Heart left ventricle (tissue), 16 donors: ENCODE measurements at regions of chr3 and their contacts with region 1.

Region 1: DNA sequence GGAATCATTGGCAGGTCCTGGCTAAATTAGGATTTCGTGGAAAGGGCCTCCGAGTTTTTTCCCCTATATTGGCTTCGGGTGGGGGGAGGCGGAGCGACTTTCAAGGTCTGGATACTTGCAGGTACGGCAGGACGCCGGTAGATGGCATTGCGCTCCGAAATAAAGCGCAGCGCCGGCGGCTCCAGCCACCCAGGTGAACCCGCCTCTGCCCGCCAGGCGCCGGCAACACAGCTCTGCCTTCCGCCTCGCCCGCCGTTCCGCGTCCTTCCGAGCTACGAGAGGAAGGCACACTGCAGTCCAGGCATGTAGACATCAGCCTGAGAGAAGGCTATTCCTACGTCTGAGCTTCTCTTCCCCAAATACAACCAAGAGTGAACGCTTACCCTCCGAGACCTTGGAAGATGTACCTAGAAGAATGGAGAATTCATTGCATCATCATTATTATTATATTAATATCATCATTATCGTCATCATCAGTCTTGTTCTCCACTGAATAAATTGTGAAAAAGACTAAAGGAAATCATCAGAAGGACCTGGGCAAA is 514.1 kb downstream of the MECOM start:
- DNase-seq: peak; percentile 84 to 89 (median 85)
- ATAC-seq: peak; percentile 79 to 88 (median 84)
- H3K4me3 ChIP-seq: peak overlapping the region in 11 of 12 donors; percentile 1 to 72 (median 43)
- H3K27ac ChIP-seq: peak overlapping the region; percentile 47 to 90 (median 70)
- H3K4me1 ChIP-seq: peaks cover 0 to 44% (median 6%) of the 10 kb centered on the region in 12 donors
- H3K27me3 ChIP-seq: peaks cover 0 to 51% (median 31%) of the 10 kb centered on the region in 9 donors
- CTCF ChIP-seq: peak; percentile 64 to 93 (median 87)
- POLR2A ChIP-seq: no peak

Region 2: DNA sequence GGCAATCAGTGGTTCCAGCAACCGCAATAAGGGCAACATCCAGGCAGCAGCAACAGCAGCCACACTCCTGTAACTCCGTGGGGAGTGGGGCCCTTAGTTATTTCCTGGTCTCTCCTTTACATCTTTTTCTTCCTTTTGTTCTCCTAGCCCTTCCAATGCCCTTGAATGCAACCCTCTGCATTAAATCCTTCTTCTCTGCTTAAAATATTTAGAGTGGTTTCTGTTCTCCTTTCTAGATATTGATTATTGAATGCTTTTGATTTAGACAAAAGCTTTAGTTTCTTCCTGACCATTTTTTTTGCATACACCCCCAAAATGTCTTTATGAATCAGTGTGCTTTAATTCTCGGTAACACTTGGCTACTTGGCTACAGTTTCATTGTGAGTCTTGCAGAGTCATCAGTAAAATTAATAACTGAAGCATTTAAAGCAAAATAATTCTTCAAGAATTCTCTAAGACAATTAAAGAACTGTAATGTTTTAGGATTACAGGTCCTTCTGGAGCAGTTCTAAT is 72.0 kb before region 1 on chr3:
- intact Hi-C with region 1: no loop called
- DNase-seq: no peak
- ATAC-seq: no peak
- H3K4me3 ChIP-seq: no peak overlapping the region
- H3K27ac ChIP-seq: no peak overlapping the region
- H3K4me1 ChIP-seq: no peaks in the 10 kb centered on the region
- H3K27me3 ChIP-seq: no peaks in the 10 kb centered on the region
- CTCF ChIP-seq: no peak
- POLR2A ChIP-seq: no peak

Region 3: GRCh38 chr3:169218314-169218983 is 69.0 kb after region 1 on chr3:
- intact Hi-C with region 1: loop called in 1 of 10 experiments (anchors 10 kb)
- DNase-seq: peak in 4 of 5 donors; percentile 30 to 60 (median 42)
- ATAC-seq: peak; percentile 61 to 84 (median 80)
- H3K4me3 ChIP-seq: no peak overlapping the region
- H3K27ac ChIP-seq: peak overlapping the region in 2 of 12 donors; percentile 4 to 21
- H3K4me1 ChIP-seq: peaks cover 0 to 10% (median 1%) of the 10 kb centered on the region in 12 donors
- H3K27me3 ChIP-seq: no peaks in the 10 kb centered on the region
- CTCF ChIP-seq: peak; percentile 44 to 79 (median 62)
- POLR2A ChIP-seq: no peak

Region 4: DNA sequence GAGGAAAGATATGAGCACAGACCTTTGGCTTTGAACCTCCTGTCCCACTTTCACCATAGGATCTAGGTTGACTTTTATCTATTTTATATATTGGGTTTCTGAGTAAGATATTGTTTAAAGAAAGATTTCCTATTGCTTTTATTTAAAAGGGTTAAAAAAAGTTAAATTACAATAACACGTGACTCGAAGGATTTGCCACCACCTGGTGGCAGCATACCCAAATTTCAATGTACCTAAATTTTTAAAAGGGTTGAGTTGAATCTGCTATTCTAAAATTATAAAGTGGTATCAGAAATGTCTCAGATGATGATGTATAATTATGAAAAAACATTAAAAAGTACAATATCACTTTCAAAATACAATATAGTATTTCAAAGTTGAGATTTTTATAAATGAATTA is 145.7 kb after region 1 on chr3:
- intact Hi-C with region 1: loop called in 4 of 10 experiments (anchors 5 to 10 kb)
- DNase-seq: no peak
- ATAC-seq: no peak
- H3K4me3 ChIP-seq: no peak overlapping the region
- H3K27ac ChIP-seq: no peak overlapping the region
- H3K4me1 ChIP-seq: peaks cover 0 to 17% (median 0%) of the 10 kb centered on the region in 12 donors
- H3K27me3 ChIP-seq: no peaks in the 10 kb centered on the region
- CTCF ChIP-seq: peak; percentile 17 to 50 (median 38)
- POLR2A ChIP-seq: no peak

Region 5: DNA sequence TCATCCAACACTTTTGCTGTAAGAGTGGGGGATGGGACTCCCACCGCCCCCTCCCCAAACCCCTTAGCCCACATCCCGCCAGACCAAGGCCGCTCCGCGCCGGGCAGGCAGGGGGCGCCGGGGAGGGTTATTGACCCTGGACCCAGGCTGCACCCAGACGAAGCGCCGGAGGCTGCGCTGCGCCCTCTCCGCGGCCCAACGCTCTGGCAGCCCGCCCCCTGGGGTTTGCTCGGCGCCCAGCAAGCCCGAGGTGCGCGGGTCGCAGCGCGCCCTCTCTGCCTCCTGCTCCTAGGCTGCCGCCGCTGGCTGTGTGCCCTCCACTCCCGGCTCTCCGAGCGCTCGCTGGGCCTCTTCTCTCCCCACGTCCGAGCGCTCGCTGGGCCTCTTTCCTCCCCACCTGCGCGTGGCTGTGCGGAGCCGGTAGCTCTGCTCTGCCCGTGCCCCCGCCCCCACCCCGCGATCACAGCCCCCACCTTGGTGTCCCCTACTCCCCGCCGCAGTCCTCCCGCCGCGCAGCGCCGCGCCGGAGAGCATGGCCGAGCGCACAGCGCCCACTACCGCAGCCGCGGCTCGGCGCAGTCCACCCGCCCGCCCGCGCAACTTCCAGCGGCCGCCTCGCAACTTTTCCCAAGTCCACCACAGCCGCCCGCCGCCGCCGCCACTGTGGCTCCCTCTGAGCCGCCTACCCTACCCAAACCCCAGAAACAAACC is 512.9 kb after region 1 on chr3:
- intact Hi-C with region 1: loop called in 8 of 10 experiments (anchors 1 to 5 kb)
- DNase-seq: peak; percentile 71 to 84 (median 72)
- ATAC-seq: peak; percentile 43 to 88 (median 80)
- H3K4me3 ChIP-seq: peak overlapping the region; percentile 68 to 95 (median 77)
- H3K27ac ChIP-seq: peak overlapping the region; percentile 74 to 96 (median 92)
- H3K4me1 ChIP-seq: peaks cover 0 to 69% (median 12%) of the 10 kb centered on the region in 12 donors
- H3K27me3 ChIP-seq: peaks cover 9 to 94% (median 63%) of the 10 kb centered on the region in 9 donors
- CTCF ChIP-seq: peak; percentile 22 to 68 (median 53)
- POLR2A ChIP-seq: no peak

Region 6: GRCh38 chr3:169764452-169765274 is 615.2 kb after region 1 on chr3 and contains the start of gene TERC:
- intact Hi-C with region 1: loop called in 2 of 10 experiments (anchors 5 to 10 kb)
- DNase-seq: peak; percentile 94 to 97 (median 95)
- ATAC-seq: peak; percentile 95 to 96 (median 96)
- H3K4me3 ChIP-seq: peak within 1 kb of the TSS; percentile 72 to 95 (median 84)
- H3K27ac ChIP-seq: peak within 1 kb of the TSS; percentile 95 to 100 (median 98)
- H3K4me1 ChIP-seq: peaks cover 0 to 12% (median 0%) of the 10 kb centered on the region in 12 donors
- H3K27me3 ChIP-seq: no peaks in the 10 kb centered on the region
- CTCF ChIP-seq: peak in 1 of 12 donors; percentile 5
- POLR2A ChIP-seq: peak; percentile 96 to 98
- total RNA-seq, gene TERC: 1.0 to 60.8 (median 3.1) TPM in 7 of 9 donors, not detected in the others